ENCODE measurements at regions of chr2 and their contacts with region 1.

Region 1: DNA sequence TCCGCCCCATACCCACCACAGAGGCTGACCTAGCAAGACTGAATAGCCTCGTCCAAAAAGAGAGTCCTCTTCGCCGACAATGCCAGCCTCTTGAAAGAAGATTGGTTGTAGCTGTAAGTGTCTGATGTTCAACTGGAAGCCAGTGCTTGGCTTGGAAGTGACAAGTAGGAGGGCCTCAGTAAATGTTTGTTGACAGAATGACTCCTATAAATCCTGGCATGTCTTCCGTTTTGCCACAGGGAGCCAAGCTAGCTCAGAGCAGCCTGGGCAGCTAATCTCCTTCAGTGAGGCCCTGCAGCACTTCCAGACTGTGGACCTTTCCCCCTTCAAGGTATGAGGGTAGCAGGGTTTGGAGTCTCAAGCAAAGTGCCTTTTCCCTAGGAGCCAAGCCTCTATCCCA is 14.9 kb downstream of the ELMOD3 start:
- DNase-seq: no peak
- ATAC-seq: no peak
- H3K4me3 ChIP-seq: no peak overlapping the region
- H3K27ac ChIP-seq: no peak overlapping the region
- H3K4me1 ChIP-seq: no peaks in the 10 kb centered on the region
- H3K27me3 ChIP-seq: no peaks in the 10 kb centered on the region
- CTCF ChIP-seq: no peak
- POLR2A ChIP-seq: no peak
- RAD21 ChIP-seq: no peak

Region 2: DNA sequence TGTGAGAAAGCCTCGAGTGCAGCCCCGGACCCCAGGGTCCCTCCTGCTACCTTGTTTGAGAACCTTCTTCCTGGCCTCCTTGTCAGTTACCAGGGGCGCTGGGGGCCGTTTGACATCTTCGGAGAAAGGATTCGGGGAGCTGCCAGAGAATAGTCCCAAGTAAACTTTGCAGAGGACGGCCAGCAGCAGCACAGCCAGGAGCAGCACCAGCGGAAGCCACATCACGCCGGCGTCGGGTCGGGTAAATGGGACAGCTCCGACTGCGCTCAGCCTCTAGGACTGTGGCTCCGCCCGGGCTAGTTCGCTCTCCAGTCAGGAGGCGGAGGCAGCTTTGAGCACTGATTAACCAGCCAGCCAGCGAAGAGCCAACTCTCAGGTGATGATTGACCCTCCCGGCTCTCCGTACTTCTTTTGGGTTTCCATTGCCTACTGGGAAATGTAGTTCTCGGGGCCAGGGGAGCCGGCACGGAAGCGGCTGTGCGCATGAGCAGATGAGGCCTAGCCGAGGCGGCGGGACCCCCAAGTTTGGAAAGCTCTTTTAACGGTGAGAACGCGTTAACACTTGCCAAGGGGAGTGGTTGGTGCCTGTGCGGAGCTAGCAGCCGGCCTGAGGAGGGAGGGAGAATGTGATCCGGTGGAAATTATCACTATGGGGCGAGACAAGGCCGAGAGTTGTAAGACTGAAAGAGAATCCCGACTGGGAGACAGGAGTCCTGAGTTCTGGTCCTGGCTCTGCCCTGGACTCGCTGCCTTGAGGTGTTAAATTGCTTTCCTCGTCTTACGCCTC is 15.0 kb before region 1 on chr2 and contains the starts of genes ELMOD3 and RETSAT:
- CTCF ChIA-PET with region 1: interaction called, 3 read pairs
- POLR2A ChIA-PET with region 1: interaction called, 14 read pairs
- RAD21 ChIA-PET with region 1: no interaction called
- intact Hi-C with region 1: no loop called
- DNase-seq: peak; percentile 99
- ATAC-seq: peak; percentile 97
- H3K4me3 ChIP-seq: peak within 1 kb of the TSS; percentile 86 to 95
- H3K27ac ChIP-seq: peak within 1 kb of the TSS; percentile 75
- H3K4me1 ChIP-seq: peaks cover 9 to 14% of the 10 kb centered on the region in 2 experiments; a peak in 3 of 4 replicates
- H3K27me3 ChIP-seq: no peaks in the 10 kb centered on the region
- CTCF ChIP-seq: no peak
- POLR2A ChIP-seq: peak; percentile 89
- RAD21 ChIP-seq: no peak
- total RNA-seq, gene ELMOD3: 9.2 TPM
- total RNA-seq, gene RETSAT: 59.7 TPM

Region 3: DNA sequence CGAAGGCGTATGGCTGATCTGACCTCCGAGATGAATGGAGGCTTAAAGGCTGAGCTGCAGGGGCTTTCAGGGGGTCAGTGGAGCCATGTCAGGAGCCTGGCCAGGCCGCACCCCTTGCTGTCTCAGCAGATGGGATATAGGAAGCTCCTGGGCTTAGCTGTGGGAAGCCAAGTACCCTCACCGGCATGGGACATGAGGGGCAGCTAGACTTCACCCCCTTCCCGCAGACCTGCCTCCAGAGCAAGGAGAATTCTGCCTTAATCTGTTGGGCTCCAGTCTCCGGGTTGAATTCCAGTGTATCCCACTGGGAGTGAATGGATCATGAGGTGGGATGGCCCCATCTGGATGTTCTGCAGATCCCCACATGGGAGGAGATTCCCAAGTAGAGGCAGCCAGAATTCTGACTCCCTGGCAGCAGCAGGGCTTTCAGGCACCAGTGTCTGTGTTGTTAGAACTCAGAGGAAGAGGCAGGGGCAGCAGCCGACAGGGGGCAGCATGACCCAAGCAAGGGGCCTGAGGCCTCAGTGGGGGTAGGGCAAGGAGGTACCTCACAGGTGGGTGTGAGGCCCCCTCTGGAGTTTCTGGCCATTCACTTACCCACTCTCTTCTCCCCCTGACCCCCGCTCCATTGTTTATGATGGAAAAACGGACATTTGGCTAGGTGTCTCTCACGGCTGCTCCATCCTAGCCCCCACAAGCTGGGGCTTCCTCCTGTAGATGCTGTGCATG is 21.6 kb after region 1 on chr2:
- CTCF ChIA-PET with region 1: no interaction called
- POLR2A ChIA-PET with region 1: no interaction called
- RAD21 ChIA-PET with region 1: no interaction called
- intact Hi-C with region 1: no loop called
- DNase-seq: peak; percentile 18
- ATAC-seq: peak; percentile 89
- H3K4me3 ChIP-seq: no peak overlapping the region
- H3K27ac ChIP-seq: no peak overlapping the region
- H3K4me1 ChIP-seq: no peaks in the 10 kb centered on the region
- H3K27me3 ChIP-seq: no peaks in the 10 kb centered on the region
- CTCF ChIP-seq: peak; percentile 58 to 82 (median 70); a peak in 5 of 6 replicates
- POLR2A ChIP-seq: no peak
- RAD21 ChIP-seq: peak; percentile 90

Measured in HCT116 (cell line).